ENCODE measurements at regions of chr17 and their contacts with region 1.

Region 1: DNA sequence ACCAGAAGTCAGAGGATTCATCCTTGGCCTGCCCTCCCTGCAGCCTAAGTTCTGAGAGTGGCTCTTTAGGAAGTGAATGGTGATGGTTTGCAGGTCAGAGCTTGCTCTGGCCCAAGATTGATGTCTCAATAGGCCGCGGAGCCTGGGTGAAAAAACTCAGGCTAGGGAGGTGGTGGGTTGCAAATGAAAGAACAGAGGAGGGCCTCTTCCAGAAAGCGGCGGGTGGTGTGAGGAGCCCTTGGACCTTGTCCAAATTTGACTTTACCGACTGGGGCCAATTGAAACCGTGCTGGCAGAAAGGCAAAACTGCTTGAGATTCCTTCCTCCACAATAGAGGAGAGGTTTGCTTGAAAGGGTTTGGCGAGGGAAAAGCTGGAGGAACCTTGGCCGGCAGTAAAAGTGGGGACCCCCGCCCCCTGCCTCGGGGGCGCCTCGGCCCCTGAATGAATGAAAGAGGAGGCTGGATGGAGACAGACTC is 331.3 kb downstream of the SEC14L1 start:
- H3K4me3 Mint-ChIP-seq: peak overlapping the region; percentile 62
- H3K27ac Mint-ChIP-seq: peak overlapping the region; percentile 66
- H3K4me1 Mint-ChIP-seq: peaks cover 100% of the 10 kb centered on the region
- H3K27me3 Mint-ChIP-seq: no peaks in the 10 kb centered on the region

Region 2: GRCh38 chr17:77437017-77437416 is 35.0 kb before region 1 on chr17:
- intact Hi-C with region 1: loop called (anchors 5 kb)
- H3K4me3 Mint-ChIP-seq: peak overlapping the region; percentile 20
- H3K27ac Mint-ChIP-seq: peak overlapping the region; percentile 87
- H3K4me1 Mint-ChIP-seq: peaks cover 91% of the 10 kb centered on the region
- H3K27me3 Mint-ChIP-seq: peaks cover 2% of the 10 kb centered on the region

Measured in dendritic cell treated with granulocyte-macrophage colony-stimulating factor and Interleukin-4, amounts not matched to agents 40 ng/mL and 50 ng/mL, for 4 days (primary cell).